CD8-positive, alpha-beta T cell (primary cell): ENCODE measurements at regions of chr4 and their contacts with region 1.

Region 1: DNA sequence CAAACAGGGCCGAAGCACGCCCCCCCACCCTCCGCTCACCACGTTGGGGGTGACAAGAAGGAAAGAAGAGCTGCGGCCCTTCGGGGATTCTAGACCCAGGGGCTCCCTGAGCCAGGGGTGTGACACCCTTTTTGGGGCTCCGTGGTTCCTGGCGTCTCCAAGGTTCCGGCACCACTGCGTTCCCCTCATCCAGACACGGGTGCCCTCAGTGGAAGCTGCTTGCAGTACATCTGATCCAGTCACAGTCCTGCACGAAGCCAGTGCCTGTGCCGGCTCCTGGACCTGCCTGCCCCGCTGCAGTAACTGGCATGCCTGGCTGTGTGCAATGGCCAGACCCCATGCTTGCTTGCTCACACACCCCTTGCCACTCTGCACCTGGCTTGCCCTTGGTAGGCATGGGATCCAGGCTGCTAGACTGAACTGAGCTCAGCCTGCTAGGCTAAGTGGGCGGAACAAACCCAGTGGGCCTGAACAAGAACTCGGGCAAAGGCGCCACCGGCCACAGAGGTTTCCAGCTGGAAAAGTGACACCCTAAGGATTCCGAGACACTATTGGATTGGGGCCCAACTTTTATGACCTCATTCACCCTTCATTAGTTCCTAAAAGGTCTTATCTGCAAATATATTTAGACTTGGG is 420.4 kb upstream of the AGA start:
- DNase-seq: no peak
- ATAC-seq: no peak
- H3K4me3 ChIP-seq: no peak overlapping the region
- H3K4me3 Mint-ChIP-seq: no peak overlapping the region
- H3K27ac ChIP-seq: no peak overlapping the region
- H3K27ac Mint-ChIP-seq: no peak overlapping the region
- H3K4me1 ChIP-seq: no peaks in the 10 kb centered on the region
- H3K4me1 Mint-ChIP-seq: no peaks in the 10 kb centered on the region
- H3K27me3 ChIP-seq: no peaks in the 10 kb centered on the region
- H3K27me3 Mint-ChIP-seq: no peaks in the 10 kb centered on the region
- CTCF ChIP-seq: no peak

Region 2: DNA sequence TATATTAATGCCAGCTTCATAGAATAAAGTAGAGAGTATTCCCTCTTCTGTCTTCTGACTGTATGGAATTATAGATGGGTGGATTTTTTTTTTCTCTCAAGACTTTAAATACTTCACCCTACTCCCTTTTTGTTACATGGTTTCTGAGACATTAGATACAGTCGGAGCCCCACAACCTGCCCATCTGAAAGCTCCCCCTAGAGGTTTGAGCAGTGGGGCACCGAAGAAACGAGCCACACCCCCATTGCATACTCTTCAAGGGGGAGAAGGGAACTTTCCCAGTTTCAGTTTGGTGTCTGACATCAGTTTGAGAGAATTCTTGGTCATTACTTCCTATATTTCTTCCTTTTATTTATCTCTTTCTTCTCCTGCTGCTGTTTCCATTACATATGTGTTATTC is 17.2 kb after region 1 on chr4:
- CTCF ChIA-PET with region 1: no interaction called
- POLR2A ChIA-PET with region 1: no interaction called
- intact Hi-C with region 1: no loop called
- DNase-seq: no peak
- ATAC-seq: no peak
- H3K4me3 ChIP-seq: no peak overlapping the region
- H3K4me3 Mint-ChIP-seq: no peak overlapping the region
- H3K27ac ChIP-seq: no peak overlapping the region
- H3K27ac Mint-ChIP-seq: no peak overlapping the region
- H3K4me1 ChIP-seq: no peaks in the 10 kb centered on the region
- H3K4me1 Mint-ChIP-seq: no peaks in the 10 kb centered on the region
- H3K27me3 ChIP-seq: no peaks in the 10 kb centered on the region
- H3K27me3 Mint-ChIP-seq: no peaks in the 10 kb centered on the region
- CTCF ChIP-seq: no peak

Region 3: GRCh38 chr4:177907736-177908424 is 45.2 kb after region 1 on chr4:
- CTCF ChIA-PET with region 1: no interaction called
- POLR2A ChIA-PET with region 1: no interaction called
- intact Hi-C with region 1: loop called in 1 of 2 experiments (anchors 1 kb)
- DNase-seq: no peak
- ATAC-seq: no peak
- H3K4me3 ChIP-seq: no peak overlapping the region
- H3K4me3 Mint-ChIP-seq: no peak overlapping the region
- H3K27ac ChIP-seq: no peak overlapping the region
- H3K27ac Mint-ChIP-seq: no peak overlapping the region
- H3K4me1 ChIP-seq: no peaks in the 10 kb centered on the region
- H3K4me1 Mint-ChIP-seq: no peaks in the 10 kb centered on the region
- H3K27me3 ChIP-seq: no peaks in the 10 kb centered on the region
- H3K27me3 Mint-ChIP-seq: no peaks in the 10 kb centered on the region
- CTCF ChIP-seq: no peak